ENCODE measurements at regions of chr14 and their contacts with region 1.

Region 1: GRCh38 chr14:94036313-94037050 is 10.3 kb downstream of the OTUB2 start:
- DNase-seq: peak; percentile 88
- H3K4me3 Mint-ChIP-seq: no peak overlapping the region
- H3K27ac Mint-ChIP-seq: no peak overlapping the region
- H3K4me1 Mint-ChIP-seq: peaks cover 5% of the 10 kb centered on the region
- H3K27me3 Mint-ChIP-seq: peaks cover 10% of the 10 kb centered on the region

Region 2: DNA sequence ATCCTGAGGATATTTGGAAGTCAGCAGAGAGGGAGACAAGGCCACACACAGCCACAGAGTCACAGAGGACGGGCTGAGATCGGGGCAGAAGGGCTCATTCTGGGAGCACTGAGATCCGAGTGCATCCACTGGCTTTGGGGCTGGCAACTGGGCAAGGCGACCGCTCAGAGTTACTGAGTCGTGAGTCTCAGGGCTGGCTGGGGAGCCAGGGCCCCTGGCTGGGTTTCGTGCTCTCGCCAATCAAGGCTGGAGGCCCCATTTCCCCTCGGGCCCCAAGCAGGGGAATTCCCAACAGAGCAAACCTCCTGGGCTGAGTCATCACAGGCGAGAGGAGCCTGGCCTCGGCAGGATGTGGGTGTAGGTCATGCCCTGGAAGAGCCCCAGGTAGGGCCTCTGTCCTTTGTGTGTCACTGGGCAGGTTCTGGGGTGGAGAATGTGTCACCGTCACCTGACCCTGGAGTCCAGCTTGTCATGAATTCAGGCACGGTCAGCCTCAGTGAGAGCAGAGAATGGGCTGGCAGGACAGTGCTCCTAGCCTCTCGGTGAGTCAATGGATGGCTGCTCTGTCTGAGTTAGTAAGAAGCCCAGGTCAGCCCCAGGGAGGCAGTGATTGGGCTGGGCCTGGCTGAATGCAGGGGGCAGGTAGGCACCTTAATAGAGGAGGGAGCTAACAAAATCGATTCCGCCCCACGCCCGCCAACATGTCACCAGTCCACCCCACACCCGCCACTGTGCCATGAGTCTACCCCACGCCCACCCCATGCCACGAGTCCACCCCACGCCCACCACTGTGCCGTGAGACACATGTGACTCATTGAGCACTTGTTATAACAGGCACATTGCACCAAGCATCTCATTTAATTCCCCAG is 77.0 kb before region 1 on chr14:
- CTCF ChIA-PET with region 1: no interaction called
- DNase-seq: peak; percentile 95
- H3K4me3 Mint-ChIP-seq: peak overlapping the region; percentile 58
- H3K27ac Mint-ChIP-seq: peak overlapping the region; percentile 96
- H3K4me1 Mint-ChIP-seq: peaks cover 97% of the 10 kb centered on the region
- H3K27me3 Mint-ChIP-seq: peaks cover 4% of the 10 kb centered on the region

Region 3: GRCh38 chr14:94051115-94051514 is 14.6 kb after region 1 on chr14:
- CTCF ChIA-PET with region 1: interaction called, 39 read pairs
- DNase-seq: no peak
- H3K4me3 Mint-ChIP-seq: no peak overlapping the region
- H3K27ac Mint-ChIP-seq: peak overlapping the region; percentile 25
- H3K4me1 Mint-ChIP-seq: peaks cover 32% of the 10 kb centered on the region
- H3K27me3 Mint-ChIP-seq: no peaks in the 10 kb centered on the region

Region 4: DNA sequence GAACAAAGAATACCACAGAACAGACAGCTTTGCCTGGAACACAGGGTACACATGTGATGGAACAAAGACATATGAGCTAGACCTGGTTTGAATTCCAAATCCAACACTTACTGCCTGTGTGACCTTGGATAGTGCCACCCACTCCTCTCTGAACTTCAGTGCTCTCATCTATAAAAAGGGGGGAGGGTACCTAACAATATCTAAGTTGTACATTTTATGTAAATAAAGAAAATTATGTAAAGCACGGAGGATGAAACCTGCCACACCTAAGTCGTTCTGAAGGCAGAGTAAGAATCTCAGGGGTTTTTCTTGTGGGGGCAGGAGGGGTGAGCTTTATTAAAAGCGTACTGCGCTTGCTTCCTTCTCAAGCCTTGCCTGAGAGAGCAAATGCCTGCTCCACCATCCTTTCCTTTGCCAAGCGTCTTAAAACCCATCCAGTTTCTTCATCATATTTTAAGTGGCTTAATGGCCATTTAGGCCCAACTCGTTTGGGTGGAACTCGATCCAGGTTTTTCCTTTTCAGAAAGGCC is 43.5 kb after region 1 on chr14:
- CTCF ChIA-PET with region 1: interaction called, 10 read pairs
- DNase-seq: no peak
- H3K4me3 Mint-ChIP-seq: peak overlapping the region; percentile 97
- H3K27ac Mint-ChIP-seq: peak overlapping the region; percentile 100
- H3K4me1 Mint-ChIP-seq: peaks cover 71% of the 10 kb centered on the region
- H3K27me3 Mint-ChIP-seq: no peaks in the 10 kb centered on the region

Region 5: GRCh38 chr14:94136575-94137331 is 100.3 kb after region 1 on chr14:
- CTCF ChIA-PET with region 1: interaction called, 153 read pairs
- DNase-seq: peak; percentile 91
- H3K4me3 Mint-ChIP-seq: no peak overlapping the region
- H3K27ac Mint-ChIP-seq: no peak overlapping the region
- H3K4me1 Mint-ChIP-seq: no peaks in the 10 kb centered on the region
- H3K27me3 Mint-ChIP-seq: peaks cover 43% of the 10 kb centered on the region

Region 6: DNA sequence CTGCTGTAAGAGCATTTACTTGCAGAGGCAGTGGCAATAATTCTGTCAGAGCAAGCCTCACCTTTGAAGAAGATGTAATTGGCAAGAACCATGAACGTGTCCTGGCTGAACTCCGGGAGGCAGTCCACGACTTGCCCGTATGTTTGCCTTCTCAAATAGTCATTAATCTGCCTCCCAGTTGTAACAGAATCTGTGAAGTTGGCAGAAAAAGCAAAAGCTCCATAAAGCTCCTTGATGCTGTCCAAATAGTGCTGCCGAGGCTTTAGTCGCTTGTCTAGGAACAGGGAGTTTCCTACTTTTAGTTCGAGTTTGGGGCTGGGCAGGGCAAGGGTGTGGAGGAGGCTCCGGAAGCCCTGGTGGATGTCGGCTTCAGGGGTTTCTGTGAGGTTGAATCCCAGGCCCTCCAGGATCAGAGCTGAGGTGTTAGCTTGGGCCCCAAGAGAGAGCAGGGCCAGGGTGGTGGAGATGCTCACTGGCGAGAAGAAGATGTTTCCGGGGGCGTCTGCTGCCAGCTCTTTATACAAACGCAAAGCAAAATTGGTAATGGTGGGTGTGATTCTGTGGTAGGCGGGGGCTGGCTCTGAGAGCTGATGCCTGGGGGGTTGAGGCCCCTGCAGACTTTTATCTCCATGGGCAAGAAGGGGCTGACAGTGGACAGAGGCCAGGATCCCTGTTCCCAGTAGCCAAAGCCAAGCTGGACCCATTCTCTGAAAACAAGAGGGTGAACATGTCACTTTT is 411.8 kb after region 1 on chr14:
- CTCF ChIA-PET with region 1: no interaction called
- DNase-seq: no peak
- H3K4me3 Mint-ChIP-seq: no peak overlapping the region
- H3K27ac Mint-ChIP-seq: no peak overlapping the region
- H3K4me1 Mint-ChIP-seq: no peaks in the 10 kb centered on the region
- H3K27me3 Mint-ChIP-seq: peaks cover 12% of the 10 kb centered on the region